GM10248 (cell line): ENCODE measurements at regions of chr3 and their contacts with region 1.

Region 1: GRCh38 chr3:171404376-171404987 is 55.7 kb downstream of the TNIK start:
- DNase-seq: no peak
- CTCF ChIP-seq: no peak

Region 2: GRCh38 chr3:171415070-171415469 is 10.6 kb after region 1 on chr3:
- CTCF ChIA-PET with region 1: interaction called, 13 read pairs
- POLR2A ChIA-PET with region 1: no interaction called
- DNase-seq: no peak
- CTCF ChIP-seq: no peak

Region 3: GRCh38 chr3:171420667-171421066 is 16.2 kb after region 1 on chr3:
- CTCF ChIA-PET with region 1: interaction called, 12 read pairs
- POLR2A ChIA-PET with region 1: no interaction called
- DNase-seq: no peak
- CTCF ChIP-seq: no peak